Activated naive CD4-positive, alpha-beta T cell treated with anti-CD3 and anti-CD28 coated beads for 36 hours (primary cell): ENCODE measurements at regions of chr22 and their contacts with region 1.

Region 1: DNA sequence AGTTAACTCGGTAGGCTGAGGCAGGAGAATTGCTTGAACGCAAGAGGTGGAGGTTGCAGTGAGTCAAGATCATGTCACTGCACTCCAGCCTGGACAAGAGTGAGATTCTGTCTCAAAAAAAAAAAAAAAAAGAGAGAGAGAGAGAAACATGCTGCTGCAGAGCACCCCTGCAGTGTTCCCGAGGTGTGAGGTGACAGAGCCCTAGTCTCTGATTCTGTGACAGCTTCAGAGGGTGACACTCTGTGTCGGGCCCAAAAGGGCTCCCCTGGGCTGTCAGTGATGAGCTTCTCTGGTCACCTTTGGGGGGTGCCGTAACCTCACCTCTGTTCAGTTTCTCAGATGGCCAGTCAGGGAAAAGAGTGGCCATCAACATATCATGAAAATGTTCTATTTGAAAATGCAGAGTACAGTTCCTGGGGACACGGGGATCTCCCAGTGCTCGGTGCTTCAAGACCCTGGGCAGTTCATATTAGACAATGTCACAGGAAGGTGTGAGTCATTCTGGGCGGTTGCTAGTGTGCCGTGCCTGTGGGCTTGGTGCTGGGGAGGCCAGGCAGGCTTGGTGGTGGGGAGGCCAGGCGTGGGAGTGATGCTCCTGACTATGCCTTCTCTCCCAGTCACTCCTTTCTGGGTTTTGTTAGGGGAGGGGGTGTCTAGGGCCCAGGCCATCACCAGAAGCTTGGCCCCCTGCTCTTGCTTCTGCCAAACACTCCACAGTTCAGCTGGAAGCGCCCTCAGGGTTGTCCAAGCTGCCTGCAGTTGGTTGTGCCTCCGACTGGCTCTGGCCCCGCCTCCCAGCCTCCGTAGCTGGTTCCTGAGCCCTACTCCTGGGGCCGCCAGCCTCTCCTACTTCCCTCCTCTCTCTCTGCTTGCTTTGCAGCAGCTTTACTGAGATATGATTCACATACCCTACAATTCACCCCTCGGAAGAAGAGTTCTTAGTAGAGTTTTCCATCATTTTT is 52.5 kb upstream of the CLDN5 start:
- DNase-seq: peak; percentile 84
- H3K4me3 Mint-ChIP-seq: peak overlapping the region; percentile 17
- H3K27ac Mint-ChIP-seq: peak overlapping the region; percentile 75
- H3K4me1 Mint-ChIP-seq: peaks cover 42% of the 10 kb centered on the region
- H3K27me3 Mint-ChIP-seq: no peaks in the 10 kb centered on the region

Region 2: DNA sequence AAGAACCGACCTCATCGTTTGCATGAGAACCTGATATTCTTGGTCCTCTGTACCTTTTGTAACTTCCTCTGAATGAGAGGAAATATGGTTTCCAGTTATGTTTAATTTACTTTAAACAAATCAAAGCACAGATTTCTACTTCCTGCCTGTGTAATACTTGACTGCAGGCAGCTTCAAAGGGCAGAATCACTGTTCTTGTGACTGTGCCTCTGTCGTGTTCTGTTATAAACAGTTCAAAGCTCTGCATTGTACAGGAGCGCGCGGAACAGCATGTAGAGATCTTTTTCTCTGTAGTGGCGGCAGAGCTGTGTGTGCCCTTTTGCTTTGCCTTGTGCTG is 20.6 kb after region 1 on chr22:
- CTCF ChIA-PET with region 1: no interaction called
- intact Hi-C with region 1: loop called (anchors 1 kb)
- DNase-seq: peak; percentile 76
- H3K4me3 Mint-ChIP-seq: peak overlapping the region; percentile 53
- H3K27ac Mint-ChIP-seq: peak overlapping the region; percentile 94
- H3K4me1 Mint-ChIP-seq: peaks cover 54% of the 10 kb centered on the region
- H3K27me3 Mint-ChIP-seq: no peaks in the 10 kb centered on the region